CD8-positive, alpha-beta T cell (primary cell): ENCODE measurements at regions of chr1 and their contacts with region 1.

Region 1: DNA sequence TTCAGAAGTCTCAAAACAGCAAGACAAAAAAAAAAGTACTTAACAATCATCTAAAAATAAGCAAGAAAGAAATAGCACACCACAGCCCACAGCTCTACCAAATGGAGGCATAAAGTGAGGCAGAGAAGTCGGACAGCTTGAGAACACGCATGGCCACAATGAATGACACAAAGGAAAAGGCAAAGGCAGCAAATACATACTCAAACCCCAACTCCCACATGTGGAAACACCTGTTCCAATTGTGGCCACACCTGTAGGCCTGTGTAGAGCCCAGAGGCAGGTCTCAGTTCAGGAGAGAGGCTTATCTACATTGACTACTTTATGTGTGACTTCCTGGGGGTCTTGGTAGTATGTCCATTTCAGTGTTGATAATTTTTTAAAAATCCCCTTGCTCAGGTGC is 543.5 kb downstream of the LMO4 start:
- DNase-seq: no peak
- ATAC-seq: no peak
- H3K4me3 ChIP-seq: no peak overlapping the region
- H3K4me3 Mint-ChIP-seq: no peak overlapping the region
- H3K27ac ChIP-seq: no peak overlapping the region
- H3K27ac Mint-ChIP-seq: no peak overlapping the region
- H3K4me1 ChIP-seq: no peaks in the 10 kb centered on the region
- H3K4me1 Mint-ChIP-seq: no peaks in the 10 kb centered on the region
- H3K27me3 ChIP-seq: no peaks in the 10 kb centered on the region
- H3K27me3 Mint-ChIP-seq: no peaks in the 10 kb centered on the region
- CTCF ChIP-seq: no peak

Region 2: DNA sequence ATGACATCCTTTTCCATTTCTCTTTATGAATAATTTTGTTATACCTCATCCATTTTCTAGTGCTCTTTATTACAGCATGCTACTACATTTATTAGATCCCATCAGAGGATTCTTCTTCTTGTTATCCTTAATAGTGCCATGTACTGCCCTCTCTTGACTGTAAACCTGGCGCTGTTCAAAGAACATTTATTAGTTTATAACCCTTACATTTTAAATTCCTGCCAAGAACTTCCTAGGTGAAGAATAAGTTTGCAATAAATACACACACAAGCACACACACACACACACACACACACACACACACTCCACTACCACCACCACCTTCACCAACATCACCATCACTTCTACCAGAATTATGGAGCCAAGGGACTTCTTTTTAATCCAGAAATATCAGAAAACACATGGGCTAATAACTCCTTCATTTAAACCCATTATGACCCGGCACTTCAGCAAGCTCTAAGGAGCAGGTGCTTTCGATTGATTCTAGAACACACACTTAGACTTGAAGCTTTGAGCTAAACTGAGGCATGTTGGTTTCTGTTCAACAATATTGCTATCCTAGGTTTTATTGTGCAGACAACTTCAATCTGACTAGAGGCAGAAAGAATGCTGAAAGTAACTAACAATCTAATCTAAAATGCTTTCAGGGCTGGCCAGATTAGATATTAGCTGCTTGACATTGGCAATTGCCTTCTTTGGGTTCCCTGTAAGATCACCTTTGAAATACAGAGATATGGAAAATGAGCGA is 13.3 kb after region 1 on chr1:
- CTCF ChIA-PET with region 1: no interaction called
- POLR2A ChIA-PET with region 1: no interaction called
- intact Hi-C with region 1: loop called in 1 of 2 experiments (anchors 1 kb)
- DNase-seq: no peak
- ATAC-seq: no peak
- H3K4me3 ChIP-seq: no peak overlapping the region
- H3K4me3 Mint-ChIP-seq: no peak overlapping the region
- H3K27ac ChIP-seq: no peak overlapping the region
- H3K27ac Mint-ChIP-seq: no peak overlapping the region
- H3K4me1 ChIP-seq: no peaks in the 10 kb centered on the region
- H3K4me1 Mint-ChIP-seq: no peaks in the 10 kb centered on the region
- H3K27me3 ChIP-seq: no peaks in the 10 kb centered on the region
- H3K27me3 Mint-ChIP-seq: no peaks in the 10 kb centered on the region
- CTCF ChIP-seq: no peak